A673 (cell line): ENCODE measurements at regions of chr3 and their contacts with region 1.

Region 1: GRCh38 chr3:99842826-99843589 is 25.3 kb downstream of the CMSS1 start:
- DNase-seq: peak; percentile 65
- H3K4me3 ChIP-seq: no peak overlapping the region
- H3K27ac ChIP-seq: no peak overlapping the region
- H3K4me1 ChIP-seq: peaks cover 32% of the 10 kb centered on the region
- H3K27me3 ChIP-seq: no peaks in the 10 kb centered on the region
- CTCF ChIP-seq: peak; percentile 79

Region 2: GRCh38 chr3:99856437-99857220 is 13.6 kb after region 1 on chr3:
- CTCF ChIA-PET with region 1: interaction called, 10 read pairs
- POLR2A ChIA-PET with region 1: no interaction called
- intact Hi-C with region 1: no loop called
- DNase-seq: no peak
- H3K4me3 ChIP-seq: no peak overlapping the region
- H3K27ac ChIP-seq: no peak overlapping the region
- H3K4me1 ChIP-seq: peaks cover 29% of the 10 kb centered on the region
- H3K27me3 ChIP-seq: no peaks in the 10 kb centered on the region
- CTCF ChIP-seq: no peak

Region 3: DNA sequence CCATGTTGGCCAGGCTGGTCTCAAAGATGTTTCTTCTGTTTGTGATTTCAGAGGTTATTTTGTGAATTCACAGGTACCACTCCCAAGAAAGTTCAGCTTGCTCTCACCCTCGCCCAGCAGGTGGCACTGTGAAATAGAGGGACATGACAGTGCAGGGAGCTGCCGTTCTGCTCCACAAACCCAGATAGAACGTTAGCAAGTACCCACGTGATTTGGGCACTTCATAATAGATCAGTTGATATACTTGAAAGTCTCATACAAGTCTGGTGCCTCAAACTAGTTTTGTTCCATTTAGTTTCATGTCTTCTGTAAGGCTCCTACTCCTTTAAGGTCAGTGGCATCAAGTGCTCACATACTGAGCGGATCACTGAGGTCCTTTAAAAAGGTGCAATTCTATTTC is 225.8 kb after region 1 on chr3:
- CTCF ChIA-PET with region 1: interaction called, 3 read pairs
- POLR2A ChIA-PET with region 1: no interaction called
- intact Hi-C with region 1: loop called (anchors 5 kb)
- DNase-seq: peak; percentile 87
- H3K4me3 ChIP-seq: no peak overlapping the region
- H3K27ac ChIP-seq: no peak overlapping the region
- H3K4me1 ChIP-seq: peaks cover 22% of the 10 kb centered on the region
- H3K27me3 ChIP-seq: no peaks in the 10 kb centered on the region
- CTCF ChIP-seq: peak; percentile 79

Region 4: GRCh38 chr3:100105541-100105940 is 262.5 kb after region 1 on chr3:
- CTCF ChIA-PET with region 1: no interaction called
- POLR2A ChIA-PET with region 1: no interaction called
- intact Hi-C with region 1: no loop called
- DNase-seq: no peak
- H3K4me3 ChIP-seq: no peak overlapping the region
- H3K27ac ChIP-seq: peak overlapping the region; percentile 34
- H3K4me1 ChIP-seq: peaks cover 31% of the 10 kb centered on the region
- H3K27me3 ChIP-seq: no peaks in the 10 kb centered on the region
- CTCF ChIP-seq: no peak

Region 5: GRCh38 chr3:100169201-100169920 is 326.4 kb after region 1 on chr3:
- CTCF ChIA-PET with region 1: no interaction called
- POLR2A ChIA-PET with region 1: no interaction called
- intact Hi-C with region 1: no loop called
- DNase-seq: peak; percentile 11
- H3K4me3 ChIP-seq: no peak overlapping the region
- H3K27ac ChIP-seq: no peak overlapping the region
- H3K4me1 ChIP-seq: no peaks in the 10 kb centered on the region
- H3K27me3 ChIP-seq: no peaks in the 10 kb centered on the region
- CTCF ChIP-seq: no peak

Region 6: DNA sequence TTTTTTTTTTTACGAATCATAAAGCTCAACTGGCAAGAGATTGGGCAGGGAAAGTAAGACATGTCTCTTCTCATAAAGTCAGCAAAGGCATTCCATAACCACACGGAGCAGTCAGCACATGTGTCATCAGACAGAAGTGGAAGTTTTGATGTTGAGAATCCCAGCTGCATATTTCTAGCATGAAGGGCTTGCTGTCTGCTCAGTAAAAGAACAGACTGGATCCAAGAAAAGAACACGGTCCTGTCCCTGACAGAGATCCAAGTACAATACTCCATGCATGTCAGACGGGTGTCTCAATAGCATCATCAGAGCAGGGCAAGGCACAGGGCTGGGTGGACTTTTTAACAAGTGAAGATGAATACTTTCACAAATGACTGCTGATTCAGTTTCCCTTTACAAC is 1112.0 kb after region 1 on chr3:
- CTCF ChIA-PET with region 1: no interaction called
- POLR2A ChIA-PET with region 1: no interaction called
- intact Hi-C with region 1: no loop called
- DNase-seq: no peak
- H3K4me3 ChIP-seq: no peak overlapping the region
- H3K27ac ChIP-seq: no peak overlapping the region
- H3K4me1 ChIP-seq: no peaks in the 10 kb centered on the region
- H3K27me3 ChIP-seq: no peaks in the 10 kb centered on the region
- CTCF ChIP-seq: no peak